Activated CD4-positive, alpha-beta T cell treated with anti-CD3 and anti-CD28 coated beads, Interleukin-2, amount 10 ng/mL, durations not matched to agents 24 days and 14 days (primary cell): ENCODE measurements at regions of chr1 and their contacts with region 1.

Region 1: GRCh38 chr1:225881969-225882693 is at the start of gene TMEM63A:
- DNase-seq: peak; percentile 97
- H3K4me3 Mint-ChIP-seq: peak within 1 kb of the TSS; percentile 85
- H3K27ac Mint-ChIP-seq: peak within 1 kb of the TSS; percentile 87
- H3K4me1 Mint-ChIP-seq: peaks cover 43% of the 10 kb centered on the region
- H3K27me3 Mint-ChIP-seq: peaks cover 14% of the 10 kb centered on the region
- total RNA-seq, gene TMEM63A: 23.0 and 28.5 TPM in 2 replicates

Region 2: DNA sequence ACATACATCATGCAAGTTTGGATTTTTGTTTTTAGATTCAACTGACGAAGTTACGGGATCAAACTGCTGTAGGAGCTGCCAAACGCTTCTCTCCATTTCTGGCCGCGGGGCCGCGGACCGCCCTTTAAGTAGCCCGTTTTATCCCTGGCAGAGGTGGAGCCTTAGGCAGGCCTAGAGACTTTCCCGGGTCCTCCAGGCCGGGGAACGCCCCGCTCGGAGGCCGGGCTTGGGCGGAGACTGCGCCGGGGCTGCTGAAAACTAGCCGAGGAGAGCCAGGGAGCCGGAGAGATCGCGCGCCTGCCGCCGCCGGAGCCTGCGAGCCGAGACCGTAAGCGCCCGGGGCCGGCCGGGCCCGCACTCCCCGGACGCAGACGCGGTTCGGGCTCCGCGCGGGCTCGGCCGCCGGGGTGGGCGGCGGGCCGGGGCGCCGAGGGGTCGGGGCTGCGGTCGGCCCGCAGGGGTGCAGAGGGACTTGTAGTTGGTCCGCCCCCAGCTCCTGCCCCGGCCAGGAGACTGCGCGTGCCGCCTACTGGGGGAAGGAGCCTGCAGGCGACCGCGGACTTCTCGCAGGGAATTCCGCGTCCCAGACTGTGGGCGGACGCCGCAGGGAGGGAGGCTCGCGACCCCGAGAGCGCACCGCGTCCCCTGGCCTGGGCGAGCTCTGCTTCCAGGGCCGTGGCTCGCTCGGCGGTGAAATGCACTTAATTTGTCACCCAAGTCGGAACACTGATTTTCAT is 72.1 kb before region 1 on chr1 and contains the start of gene EPHX1:
- intact Hi-C with region 1: loop called (anchors 5 kb)
- DNase-seq: peak; percentile 94
- H3K4me3 Mint-ChIP-seq: peak within 1 kb of the TSS; percentile 90
- H3K27ac Mint-ChIP-seq: peak within 1 kb of the TSS; percentile 67
- H3K4me1 Mint-ChIP-seq: peaks cover 8% of the 10 kb centered on the region
- H3K27me3 Mint-ChIP-seq: peaks cover 22% of the 10 kb centered on the region
- total RNA-seq, gene EPHX1: 1.6 and 1.8 TPM in 2 replicates

Region 3: DNA sequence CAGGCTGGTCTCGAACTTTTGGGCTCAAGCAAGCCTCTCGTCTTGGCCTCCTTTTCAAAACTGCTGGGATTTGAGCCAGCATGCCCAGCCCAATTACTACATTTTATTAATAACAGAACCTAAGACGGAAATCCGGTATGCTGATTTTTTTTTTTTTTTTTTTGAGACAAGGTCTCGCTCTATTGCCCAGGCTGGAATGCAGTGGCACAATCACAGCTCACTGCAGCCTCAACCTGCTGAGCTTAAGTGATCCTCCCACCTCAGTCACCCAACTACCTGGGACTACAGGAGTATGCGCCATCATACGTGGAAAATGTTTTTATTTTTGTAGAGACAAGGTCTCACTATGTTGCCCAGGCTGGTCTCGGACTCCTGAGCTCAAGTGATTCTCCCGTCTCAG is 284.2 kb after region 1 on chr1:
- intact Hi-C with region 1: no loop called
- DNase-seq: no peak
- H3K4me3 Mint-ChIP-seq: no peak overlapping the region
- H3K27ac Mint-ChIP-seq: no peak overlapping the region
- H3K4me1 Mint-ChIP-seq: no peaks in the 10 kb centered on the region
- H3K27me3 Mint-ChIP-seq: no peaks in the 10 kb centered on the region

Region 4: GRCh38 chr1:226274138-226274537 is 392.0 kb after region 1 on chr1:
- intact Hi-C with region 1: no loop called
- DNase-seq: no peak
- H3K4me3 Mint-ChIP-seq: no peak overlapping the region
- H3K27ac Mint-ChIP-seq: no peak overlapping the region
- H3K4me1 Mint-ChIP-seq: no peaks in the 10 kb centered on the region
- H3K27me3 Mint-ChIP-seq: no peaks in the 10 kb centered on the region